Transverse colon (tissue), 4 donors: ENCODE measurements at regions of chr3 and their contacts with region 1.

Region 1: DNA sequence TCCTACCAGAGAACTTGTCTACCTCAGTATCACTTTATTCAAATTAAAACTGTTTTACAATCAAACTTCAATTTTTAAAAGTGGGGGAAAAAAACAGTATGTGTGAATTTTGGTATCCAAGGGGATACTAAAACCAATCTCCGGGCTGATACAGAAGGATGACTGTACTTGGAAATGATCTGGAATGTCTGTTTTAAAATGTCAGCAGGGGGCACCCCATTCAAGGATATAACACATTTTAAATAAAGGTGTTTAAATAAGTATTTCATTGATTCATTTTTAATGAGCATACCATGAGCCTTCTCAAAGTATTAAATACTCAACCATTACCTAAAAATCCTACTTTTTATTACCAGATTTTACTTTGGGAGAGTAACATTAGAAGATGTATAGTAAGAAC is 67.9 kb downstream of the ULK4 start:
- DNase-seq: no peak
- H3K4me3 ChIP-seq: no peak overlapping the region
- H3K27ac ChIP-seq: no peak overlapping the region
- H3K4me1 ChIP-seq: no peaks in the 10 kb centered on the region
- H3K27me3 ChIP-seq: no peaks in the 10 kb centered on the region
- CTCF ChIP-seq: peak in 4 of 5 experiments; percentile 44 to 56 (median 48)
- EP300 ChIP-seq: no peak
- POLR2A ChIP-seq: no peak

Region 2: GRCh38 chr3:42090973-42091731 is 197.2 kb after region 1 on chr3 and contains the start of gene TRAK1:
- in situ Hi-C with region 1: loop called in 3 of 4 experiments (anchors 5 to 10 kb)
- intact Hi-C with region 1: no loop called
- DNase-seq: no peak
- H3K4me3 ChIP-seq: peak within 1 kb of the TSS in 2 of 4 donors; percentile 3 to 20
- H3K27ac ChIP-seq: peak within 1 kb of the TSS; percentile 47 to 72 (median 57)
- H3K4me1 ChIP-seq: peaks cover 0 to 22% (median 6%) of the 10 kb centered on the region in 4 donors
- H3K27me3 ChIP-seq: no peaks in the 10 kb centered on the region
- CTCF ChIP-seq: no peak
- EP300 ChIP-seq: no peak
- POLR2A ChIP-seq: no peak
- total RNA-seq, gene TRAK1: 91.7 to 247 (median 115) TPM

Region 3: GRCh38 chr3:42099011-42099765 is 205.2 kb after region 1 on chr3:
- in situ Hi-C with region 1: loop called in 3 of 4 experiments (anchors 5 to 10 kb)
- intact Hi-C with region 1: loop called (anchors 2 kb)
- DNase-seq: no peak
- H3K4me3 ChIP-seq: no peak overlapping the region
- H3K27ac ChIP-seq: peak overlapping the region; percentile 5 to 37 (median 11)
- H3K4me1 ChIP-seq: peaks cover 5 to 29% (median 13%) of the 10 kb centered on the region in 4 donors
- H3K27me3 ChIP-seq: no peaks in the 10 kb centered on the region
- CTCF ChIP-seq: no peak
- EP300 ChIP-seq: no peak
- POLR2A ChIP-seq: no peak

Region 4: DNA sequence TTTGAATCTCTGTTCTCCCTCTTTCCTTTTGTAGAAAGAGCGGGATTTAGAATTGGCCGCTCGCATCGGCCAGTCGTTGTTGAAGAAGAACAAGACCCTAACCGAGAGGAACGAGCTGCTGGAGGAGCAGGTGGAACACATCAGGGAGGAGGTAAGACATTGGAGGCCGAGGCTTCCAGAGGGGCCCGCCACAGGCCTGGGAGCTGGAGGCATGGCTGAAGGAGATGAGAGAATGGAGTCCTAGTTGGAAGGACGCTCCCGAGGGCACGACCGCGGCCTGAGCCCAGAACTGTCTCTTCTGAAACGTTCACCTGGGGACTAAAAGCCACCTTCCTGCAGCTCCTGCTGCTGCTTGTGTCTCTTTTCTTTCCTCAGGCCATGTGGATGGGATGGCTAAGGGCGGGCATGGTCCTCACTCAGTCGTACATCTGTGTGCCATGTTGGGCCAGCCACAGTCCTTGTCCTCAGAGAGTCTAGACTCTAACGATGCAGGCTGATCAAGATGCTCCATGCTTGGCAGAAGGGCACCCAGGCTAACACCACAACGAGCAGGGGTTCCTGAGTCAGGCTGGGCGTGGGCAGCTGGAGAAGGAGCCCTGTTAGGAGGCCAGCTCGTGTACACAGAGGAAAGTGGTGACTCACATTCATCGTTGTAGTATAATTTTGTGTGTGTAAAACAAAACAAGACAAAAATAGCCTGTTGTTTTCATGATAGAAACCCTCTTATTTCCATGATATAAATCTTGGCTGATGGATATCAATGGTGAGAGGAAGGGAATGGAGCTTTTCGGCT is 290.9 kb after region 1 on chr3:
- in situ Hi-C with region 1: loop called in 1 of 4 experiments (anchors 10 kb)
- intact Hi-C with region 1: no loop called
- DNase-seq: peak; percentile 26
- H3K4me3 ChIP-seq: no peak overlapping the region
- H3K27ac ChIP-seq: peak overlapping the region in 1 of 4 donors; percentile 12
- H3K4me1 ChIP-seq: peaks cover 1 to 20% (median 11%) of the 10 kb centered on the region in 4 donors
- H3K27me3 ChIP-seq: no peaks in the 10 kb centered on the region
- CTCF ChIP-seq: no peak
- EP300 ChIP-seq: no peak
- POLR2A ChIP-seq: no peak

Region 5: DNA sequence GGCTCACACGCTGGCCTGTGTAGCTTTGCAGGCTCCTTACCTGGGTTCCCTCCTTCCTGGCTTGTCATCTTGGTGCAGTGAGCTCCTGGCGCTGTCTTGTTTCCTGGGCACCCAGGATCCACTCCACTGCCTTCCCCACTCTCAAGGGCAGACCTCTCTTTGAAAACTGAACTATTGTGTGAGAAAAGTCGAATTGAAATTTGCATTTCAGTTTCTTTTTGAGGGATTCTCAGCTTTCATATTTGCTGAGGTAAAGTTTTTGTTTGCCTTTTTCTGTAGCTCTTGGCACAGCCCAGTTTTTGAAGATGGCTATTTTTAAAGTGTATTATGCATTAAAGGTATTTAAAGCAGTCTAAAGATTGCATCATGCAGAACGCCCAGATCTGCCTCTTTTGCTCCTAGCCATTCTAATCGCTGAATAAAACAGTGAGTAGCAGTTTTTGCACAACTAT is 301.9 kb after region 1 on chr3:
- in situ Hi-C with region 1: loop called in 1 of 4 experiments (anchors 5 kb)
- intact Hi-C with region 1: no loop called
- DNase-seq: no peak
- H3K4me3 ChIP-seq: no peak overlapping the region
- H3K27ac ChIP-seq: no peak overlapping the region
- H3K4me1 ChIP-seq: peaks cover 0 to 4% (median 0%) of the 10 kb centered on the region in 4 donors
- H3K27me3 ChIP-seq: no peaks in the 10 kb centered on the region
- CTCF ChIP-seq: no peak
- EP300 ChIP-seq: no peak
- POLR2A ChIP-seq: no peak

Region 6: DNA sequence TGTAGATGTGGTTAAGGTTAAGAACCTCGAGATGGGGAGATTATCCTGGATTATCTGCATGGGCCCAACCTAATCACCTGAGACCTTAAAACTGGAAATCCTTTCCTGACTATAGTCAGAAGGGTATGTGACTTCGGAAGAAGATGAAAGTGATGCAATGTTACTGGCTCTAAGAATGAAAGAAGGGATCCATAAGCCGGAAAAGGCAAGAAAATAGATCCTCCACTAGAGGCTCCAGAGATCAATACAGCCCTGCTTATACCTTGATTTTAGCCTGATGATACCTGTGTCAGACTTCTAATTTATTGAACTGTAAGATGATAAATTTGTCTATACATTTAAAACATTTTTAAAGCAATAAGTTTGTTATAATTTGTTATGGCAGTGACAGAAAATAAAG is 1063.6 kb after region 1 on chr3:
- in situ Hi-C with region 1: no loop called
- intact Hi-C with region 1: no loop called
- DNase-seq: no peak
- H3K4me3 ChIP-seq: no peak overlapping the region
- H3K27ac ChIP-seq: no peak overlapping the region
- H3K4me1 ChIP-seq: peaks cover 0 to 3% (median 0%) of the 10 kb centered on the region in 4 donors
- H3K27me3 ChIP-seq: no peaks in the 10 kb centered on the region
- CTCF ChIP-seq: no peak
- EP300 ChIP-seq: no peak
- POLR2A ChIP-seq: no peak